ACHN (cell line): ENCODE measurements at regions of chr1 and their contacts with region 1.

Region 1: GRCh38 chr1:159891275-159892157 is 8.4 kb downstream of the CFAP45 start:
- DNase-seq: peak; percentile 92

Region 2: DNA sequence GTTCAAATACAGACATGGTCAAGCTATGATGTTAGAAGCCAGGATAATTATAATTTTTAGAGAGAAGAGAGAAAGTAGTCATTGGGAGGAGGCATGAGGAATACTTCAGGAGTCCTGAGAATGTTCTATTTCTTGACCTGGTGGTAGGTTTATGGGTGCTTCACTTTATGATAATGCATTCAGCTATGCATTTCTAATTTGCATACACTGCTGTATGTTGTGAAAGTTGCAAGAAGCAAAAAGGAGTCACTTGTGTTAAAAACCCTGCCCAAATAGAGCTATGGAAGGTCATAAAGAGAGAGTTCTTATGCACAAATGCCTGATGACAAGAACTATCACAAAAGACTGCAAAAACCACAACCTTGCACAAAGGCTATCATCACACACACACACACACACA is 258.6 kb before region 1 on chr1:
- in situ Hi-C with region 1: no loop called
- DNase-seq: no peak

Region 3: DNA sequence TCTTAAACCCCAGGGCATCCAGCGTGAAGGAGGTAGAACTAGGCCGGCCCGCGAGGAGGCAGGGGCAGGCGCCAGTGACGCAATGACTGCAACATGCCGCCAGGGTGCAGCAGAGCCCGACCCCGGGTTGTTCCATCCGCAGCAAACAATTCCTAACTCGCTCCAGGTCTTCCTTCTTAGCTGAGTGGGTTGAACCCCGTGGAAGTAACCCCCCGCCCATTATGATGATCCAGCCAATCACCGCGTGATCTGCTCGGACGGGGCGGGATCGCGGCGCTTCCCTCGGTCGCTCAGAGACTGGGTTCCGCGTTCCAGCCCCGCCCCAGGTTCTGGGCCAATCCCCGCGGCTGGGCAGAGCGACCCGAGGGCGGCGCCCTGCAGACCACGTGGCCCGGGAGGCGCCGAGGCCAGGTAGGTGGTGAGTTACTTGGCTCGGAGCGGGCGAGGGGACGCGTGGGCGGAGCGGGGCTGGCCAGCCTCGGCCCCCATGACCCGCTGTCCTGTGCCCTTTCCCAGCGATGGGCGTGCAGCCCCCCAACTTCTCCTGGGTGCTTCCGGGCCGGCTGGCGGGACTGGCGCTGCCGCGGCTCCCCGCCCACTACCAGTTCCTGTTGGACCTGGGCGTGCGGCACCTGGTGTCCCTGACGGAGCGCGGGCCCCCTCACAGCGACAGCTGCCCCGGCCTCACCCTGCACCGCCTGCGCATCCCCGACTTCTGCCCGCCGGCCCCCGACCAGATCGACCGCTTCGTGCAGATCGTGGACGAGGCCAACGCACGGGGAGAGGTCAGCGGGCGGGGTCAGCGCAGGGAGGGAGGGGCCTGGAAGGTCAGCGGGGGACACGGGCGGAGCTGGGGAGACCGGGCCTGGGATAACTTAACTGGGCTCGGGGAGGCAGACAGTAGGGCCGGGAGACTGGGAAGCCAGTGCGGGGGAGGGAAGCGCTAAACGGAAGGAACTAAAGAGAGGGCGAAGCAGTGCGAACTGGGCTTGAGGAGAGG is 110.6 kb before region 1 on chr1 and contains the start of gene DUSP23:
- in situ Hi-C with region 1: loop called (anchors 25 kb)
- DNase-seq: peak; percentile 98

Region 4: GRCh38 chr1:160070243-160071163 is 179.0 kb after region 1 on chr1:
- in situ Hi-C with region 1: no loop called
- DNase-seq: peak; percentile 72